ENCODE measurements at regions of chr20 and their contacts with region 1.

Region 1: DNA sequence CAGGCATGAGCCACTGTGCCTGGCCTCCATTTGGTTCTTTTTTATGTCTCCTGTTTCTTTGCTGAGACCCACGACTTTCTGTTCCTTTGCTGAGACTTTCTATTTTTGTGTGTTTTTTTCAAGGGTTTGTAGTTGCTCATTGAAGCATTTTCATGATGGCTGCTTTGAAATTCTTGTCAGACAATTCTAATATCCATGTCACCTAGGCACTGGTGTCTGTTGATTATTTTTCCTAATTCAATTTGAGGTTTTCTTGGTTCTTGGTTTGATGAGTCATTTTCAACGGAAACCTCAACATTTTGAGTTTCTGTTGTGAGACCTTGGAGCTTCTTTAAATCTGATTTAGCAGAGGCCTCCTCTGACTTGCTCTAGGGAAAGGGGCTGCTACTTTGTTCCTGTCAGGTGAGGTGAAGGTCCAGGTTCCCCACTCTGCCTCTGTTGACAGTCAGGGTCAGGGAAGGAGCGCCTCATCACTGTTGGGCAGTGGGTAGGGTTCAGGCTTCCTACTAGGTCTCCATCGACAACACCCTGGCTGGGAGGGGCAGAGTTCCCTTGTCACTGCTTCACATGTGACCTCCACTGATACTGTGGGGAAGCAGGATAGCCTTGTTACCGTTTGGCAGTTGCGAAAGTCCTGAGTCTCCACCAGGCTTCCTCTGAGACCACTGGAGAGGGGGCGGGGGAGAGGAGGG is 67.2 kb upstream of the RNF24 start:
- DNase-seq: peak; percentile 29 to 73
- ATAC-seq: peak; percentile 56 to 70 (median 69)
- H3K4me3 ChIP-seq: no peak overlapping the region
- H3K4me3 Mint-ChIP-seq: peak overlapping the region; percentile 18
- H3K27ac ChIP-seq: peak overlapping the region; percentile 83
- H3K27ac Mint-ChIP-seq: peak overlapping the region; percentile 8 to 73
- H3K4me1 ChIP-seq: peaks cover 36% of the 10 kb centered on the region
- H3K4me1 Mint-ChIP-seq: peaks cover 25 to 29% of the 10 kb centered on the region in 2 donors
- H3K27me3 ChIP-seq: no peaks in the 10 kb centered on the region
- H3K27me3 Mint-ChIP-seq: peaks cover 20 to 31% of the 10 kb centered on the region in 2 donors
- CTCF ChIP-seq: no peak

Region 2: GRCh38 chr20:3679749-3680700 is 402.5 kb before region 1 on chr20:
- intact Hi-C with region 1: loop called (anchors 1 kb)
- DNase-seq: no peak
- ATAC-seq: no peak
- H3K4me3 ChIP-seq: no peak overlapping the region
- H3K4me3 Mint-ChIP-seq: no peak overlapping the region
- H3K27ac ChIP-seq: no peak overlapping the region
- H3K27ac Mint-ChIP-seq: no peak overlapping the region
- H3K4me1 ChIP-seq: peaks cover 13% of the 10 kb centered on the region
- H3K4me1 Mint-ChIP-seq: peaks cover 0 to 11% of the 10 kb centered on the region in 2 donors
- H3K27me3 ChIP-seq: peaks cover 12% of the 10 kb centered on the region
- H3K27me3 Mint-ChIP-seq: peaks cover 48 to 63% of the 10 kb centered on the region in 2 donors
- CTCF ChIP-seq: no peak

Region 3: DNA sequence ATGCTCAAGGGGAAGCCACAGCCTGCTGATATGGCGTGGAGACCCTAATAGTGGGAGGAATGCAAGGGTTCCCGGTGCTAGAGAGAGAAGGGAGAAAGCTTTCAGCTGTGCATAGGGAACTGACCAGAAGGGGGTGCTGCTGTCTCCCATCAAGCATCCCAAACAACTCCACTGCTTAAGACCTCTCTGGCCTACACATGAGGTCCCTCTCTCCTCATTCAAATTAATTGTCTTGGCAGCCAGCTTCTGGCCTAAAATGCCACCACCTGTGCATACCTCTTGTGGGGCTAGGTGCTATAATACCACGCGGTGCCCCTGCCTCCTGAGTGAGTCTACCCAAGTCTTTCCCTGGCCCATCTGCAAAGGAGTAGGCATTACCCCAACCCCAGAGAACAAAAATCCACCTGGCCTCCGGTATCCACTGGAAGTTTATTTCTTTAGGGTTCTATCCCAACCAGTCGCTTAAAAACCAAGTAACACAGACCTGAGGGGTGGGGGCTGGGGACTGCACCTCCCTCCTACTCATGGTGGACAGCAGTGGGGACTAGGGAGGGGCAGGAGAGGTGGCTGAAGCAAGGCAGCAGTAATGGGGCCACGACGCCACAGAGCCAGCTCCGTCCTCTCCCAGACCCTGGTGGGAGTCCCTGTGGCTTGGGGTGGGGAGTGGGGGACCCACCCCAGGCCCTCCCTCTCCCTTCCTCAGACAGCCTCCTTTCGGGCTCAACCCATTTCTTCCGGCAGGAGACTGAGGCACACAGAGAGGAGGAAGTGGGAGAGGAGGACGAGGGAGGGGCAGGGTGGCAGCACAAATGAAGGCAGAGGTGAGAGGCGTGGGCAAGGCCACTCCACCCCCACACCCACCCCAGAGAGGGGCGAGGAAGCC is 329.2 kb before region 1 on chr20:
- intact Hi-C with region 1: loop called (anchors 1 kb)
- DNase-seq: peak; percentile 53 to 84
- ATAC-seq: peak; percentile 78 to 97 (median 84)
- H3K4me3 ChIP-seq: no peak overlapping the region
- H3K4me3 Mint-ChIP-seq: peak overlapping the region; percentile 35
- H3K27ac ChIP-seq: no peak overlapping the region
- H3K27ac Mint-ChIP-seq: no peak overlapping the region
- H3K4me1 ChIP-seq: no peaks in the 10 kb centered on the region
- H3K4me1 Mint-ChIP-seq: peaks cover 0 to 4% of the 10 kb centered on the region in 2 donors
- H3K27me3 ChIP-seq: no peaks in the 10 kb centered on the region
- H3K27me3 Mint-ChIP-seq: no peaks in the 10 kb centered on the region
- CTCF ChIP-seq: peak; percentile 71

Region 4: DNA sequence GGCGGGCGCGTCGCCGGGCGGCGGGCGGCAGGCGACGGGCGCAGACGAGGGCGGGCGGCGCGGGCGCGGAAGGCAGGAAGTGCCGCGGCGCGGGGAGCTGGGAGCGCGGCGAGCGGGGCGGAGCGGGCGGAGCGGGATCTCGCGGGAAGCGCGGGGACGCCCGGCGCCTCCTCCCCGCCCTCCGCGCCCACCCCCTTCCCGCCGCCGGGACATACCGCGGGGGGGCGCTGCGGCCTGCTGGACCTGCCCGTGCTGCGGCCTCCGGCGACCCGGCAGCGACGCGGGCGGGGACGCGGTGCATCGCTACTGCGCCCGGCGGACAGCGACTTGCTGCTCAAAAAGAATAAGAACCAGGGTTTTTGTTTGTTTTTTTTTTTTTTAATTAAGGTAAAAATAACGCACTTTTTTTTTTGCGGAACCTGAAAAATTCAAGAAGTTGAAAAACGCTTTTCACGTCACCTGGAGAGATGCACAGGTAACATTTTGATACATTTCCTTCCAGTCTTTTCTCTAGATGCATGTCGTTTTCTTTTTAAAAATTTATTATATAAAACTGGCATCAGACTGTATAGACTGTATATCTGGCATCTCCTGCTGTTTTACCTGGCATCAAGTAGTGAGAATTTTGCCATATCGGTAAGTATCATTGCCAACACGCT is 295.8 kb before region 1 on chr20 and contains the start of gene CENPB:
- intact Hi-C with region 1: loop called (anchors 10 kb)
- DNase-seq: peak; percentile 93
- ATAC-seq: peak; percentile 93 to 98 (median 95)
- H3K4me3 ChIP-seq: peak within 1 kb of the TSS; percentile 50
- H3K4me3 Mint-ChIP-seq: peak within 1 kb of the TSS; percentile 84
- H3K27ac ChIP-seq: peak within 1 kb of the TSS; percentile 57
- H3K27ac Mint-ChIP-seq: peak within 1 kb of the TSS; percentile 65 to 69
- H3K4me1 ChIP-seq: peaks cover 25% of the 10 kb centered on the region
- H3K4me1 Mint-ChIP-seq: peaks cover 18 to 44% of the 10 kb centered on the region in 2 donors
- H3K27me3 ChIP-seq: no peaks in the 10 kb centered on the region
- H3K27me3 Mint-ChIP-seq: no peaks in the 10 kb centered on the region
- CTCF ChIP-seq: peak; percentile 84
- total RNA-seq, gene CENPB: 46.7 to 62.6 (median 55.4) TPM

Region 5: GRCh38 chr20:3901028-3901705 is 181.4 kb before region 1 on chr20:
- intact Hi-C with region 1: no loop called
- DNase-seq: no peak
- ATAC-seq: no peak
- H3K4me3 ChIP-seq: no peak overlapping the region
- H3K4me3 Mint-ChIP-seq: peak overlapping the region; percentile 58
- H3K27ac ChIP-seq: peak overlapping the region; percentile 14
- H3K27ac Mint-ChIP-seq: peak overlapping the region; percentile 75 to 78
- H3K4me1 ChIP-seq: peaks cover 57% of the 10 kb centered on the region
- H3K4me1 Mint-ChIP-seq: peaks cover 61 to 69% of the 10 kb centered on the region in 2 donors
- H3K27me3 ChIP-seq: no peaks in the 10 kb centered on the region
- H3K27me3 Mint-ChIP-seq: no peaks in the 10 kb centered on the region
- CTCF ChIP-seq: no peak

Region 6: DNA sequence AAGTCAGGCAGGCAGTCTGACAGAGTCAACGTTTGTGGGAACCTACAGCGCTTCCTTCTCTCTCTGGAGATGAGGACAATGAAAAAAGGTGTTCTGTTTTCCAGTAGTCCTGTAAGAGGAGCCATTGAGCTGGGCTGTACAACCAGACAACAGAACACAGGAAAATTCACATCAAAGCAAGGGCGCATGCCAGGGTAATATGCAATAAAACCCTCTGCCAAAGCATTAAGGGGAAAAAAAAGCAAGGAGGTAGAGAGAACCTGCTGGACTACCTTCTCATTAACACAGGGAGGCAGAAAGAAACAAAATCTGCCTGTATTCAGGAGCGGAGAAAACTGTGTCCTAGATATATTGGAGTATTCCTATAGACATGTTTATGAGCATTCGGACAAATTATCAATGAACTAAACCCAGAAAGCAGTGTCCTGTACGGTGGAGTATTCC is 68.5 kb before region 1 on chr20:
- intact Hi-C with region 1: loop called (anchors 2 kb)
- DNase-seq: peak in 1 of 2 donors; percentile 68
- ATAC-seq: no peak
- H3K4me3 ChIP-seq: no peak overlapping the region
- H3K4me3 Mint-ChIP-seq: peak overlapping the region; percentile 63
- H3K27ac ChIP-seq: no peak overlapping the region
- H3K27ac Mint-ChIP-seq: peak overlapping the region; percentile 29 to 81
- H3K4me1 ChIP-seq: peaks cover 24% of the 10 kb centered on the region
- H3K4me1 Mint-ChIP-seq: peaks cover 22 to 23% of the 10 kb centered on the region in 2 donors
- H3K27me3 ChIP-seq: no peaks in the 10 kb centered on the region
- H3K27me3 Mint-ChIP-seq: no peaks in the 10 kb centered on the region
- CTCF ChIP-seq: no peak

Region 7: DNA sequence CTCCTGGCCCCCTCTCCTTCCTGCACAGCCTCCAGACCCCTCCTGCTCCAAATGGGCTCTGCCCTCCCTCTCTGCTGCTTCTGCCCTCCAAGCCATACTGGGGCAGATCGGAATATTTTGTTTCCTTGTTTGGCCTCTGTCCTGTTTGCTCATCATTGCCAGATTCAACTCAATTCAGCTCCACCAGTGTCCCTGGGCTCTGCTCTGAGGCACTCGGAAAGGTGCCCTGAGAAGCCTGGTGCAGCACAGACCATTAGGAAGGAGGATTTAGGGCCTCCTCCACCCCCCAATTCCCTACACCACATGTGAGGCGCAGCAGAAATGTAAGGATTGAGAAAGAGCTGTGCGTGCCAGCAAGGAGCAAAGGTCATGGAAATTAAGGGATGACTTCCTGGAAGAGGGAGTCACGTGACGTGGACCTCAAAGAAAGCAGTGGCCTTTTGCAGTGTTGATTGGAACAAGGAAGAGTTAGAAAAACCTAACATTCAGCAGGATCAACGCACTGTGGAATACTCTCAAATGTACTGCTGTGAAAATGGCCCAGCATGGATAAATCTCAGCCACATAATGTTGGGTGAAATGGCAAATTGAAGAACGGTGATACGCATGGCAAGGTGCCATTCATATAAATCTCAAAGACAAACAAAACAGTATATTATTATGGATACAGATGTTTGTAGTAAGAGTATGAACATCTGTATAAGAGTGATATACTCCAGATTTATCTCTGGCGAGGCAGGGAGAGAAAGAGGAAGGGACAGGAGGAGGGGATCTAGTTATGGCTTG is 162.3 kb after region 1 on chr20:
- intact Hi-C with region 1: no loop called
- DNase-seq: no peak
- ATAC-seq: no peak
- H3K4me3 ChIP-seq: no peak overlapping the region
- H3K4me3 Mint-ChIP-seq: no peak overlapping the region
- H3K27ac ChIP-seq: no peak overlapping the region
- H3K27ac Mint-ChIP-seq: no peak overlapping the region
- H3K4me1 ChIP-seq: no peaks in the 10 kb centered on the region
- H3K4me1 Mint-ChIP-seq: peaks cover 0 to 5% of the 10 kb centered on the region in 2 donors
- H3K27me3 ChIP-seq: no peaks in the 10 kb centered on the region
- H3K27me3 Mint-ChIP-seq: peaks cover 41 to 56% of the 10 kb centered on the region in 2 donors
- CTCF ChIP-seq: no peak

Measured in natural killer cell (primary cell).